ENCODE measurements at regions of chr17 and their contacts with region 1.

Region 1: GRCh38 chr17:55570360-55570759 is 59.1 kb upstream of the SMIM36 start:
- DNase-seq: no peak
- H3K4me3 ChIP-seq: no peak overlapping the region
- H3K27ac ChIP-seq: no peak overlapping the region
- H3K4me1 ChIP-seq: peaks cover 7% of the 10 kb centered on the region
- H3K27me3 ChIP-seq: no peaks in the 10 kb centered on the region
- CTCF ChIP-seq: no peak
- POLR2A ChIP-seq: no peak

Region 2: DNA sequence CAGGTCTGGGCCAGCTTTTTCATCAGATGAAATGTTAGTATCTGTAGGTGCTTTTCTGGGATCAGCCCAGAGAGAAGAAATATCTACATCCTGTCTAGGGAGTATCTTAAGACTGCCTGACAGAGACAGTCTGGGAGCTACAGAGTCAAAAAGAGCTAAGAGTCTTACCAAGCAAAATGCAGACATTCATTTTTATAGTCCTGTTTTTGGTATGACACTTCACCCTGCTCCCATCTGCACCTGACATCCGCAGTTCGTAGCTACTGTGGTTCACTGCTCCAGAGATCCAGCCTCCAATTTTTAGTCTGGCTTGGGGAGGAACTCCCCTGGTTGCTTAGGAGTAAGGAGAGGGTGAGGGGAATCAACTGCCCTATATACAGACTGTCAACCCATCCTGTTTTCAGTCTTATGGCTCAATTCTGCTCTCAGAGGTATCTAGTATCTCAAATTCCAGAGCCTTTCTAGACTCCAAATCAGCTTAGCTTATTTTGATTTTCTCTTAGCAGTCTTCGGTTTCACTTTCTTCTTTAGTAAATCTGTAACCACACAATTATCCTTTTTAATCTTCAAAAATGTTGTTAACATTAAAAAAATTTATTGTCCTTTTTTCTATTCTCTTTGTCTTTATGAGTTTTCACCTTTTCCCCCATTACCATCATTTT is 54.5 kb after region 1 on chr17:
- intact Hi-C with region 1: loop called (anchors 5 kb)
- DNase-seq: no peak
- H3K4me3 ChIP-seq: no peak overlapping the region
- H3K27ac ChIP-seq: no peak overlapping the region
- H3K4me1 ChIP-seq: no peaks in the 10 kb centered on the region
- H3K27me3 ChIP-seq: no peaks in the 10 kb centered on the region
- CTCF ChIP-seq: no peak
- POLR2A ChIP-seq: no peak

Measured in vagina (tissue), 2 donors.